Endothelial cell of umbilical vein (primary cell): ENCODE measurements at regions of chr6 and their contacts with region 1.

Region 1: GRCh38 chr6:26532699-26533531 is 5.3 kb upstream of the HMGN4 start:
- DNase-seq: peak; percentile 96
- H3K4me3 ChIP-seq: peak overlapping the region; percentile 65 to 74 (median 65)
- H3K27ac ChIP-seq: peak overlapping the region; percentile 4
- H3K4me1 ChIP-seq: peaks cover 14% of the 10 kb centered on the region
- H3K27me3 ChIP-seq: no peaks in the 10 kb centered on the region
- CTCF ChIP-seq: no peak
- POLR2A ChIP-seq: no peak

Region 2: GRCh38 chr6:26421259-26422144 is 111.4 kb before region 1 on chr6:
- CTCF ChIA-PET with region 1: no interaction called
- POLR2A ChIA-PET with region 1: no interaction called
- dilution Hi-C with region 1: no loop called
- intact Hi-C with region 1: loop called (anchors 5 kb)
- DNase-seq: peak; percentile 95
- H3K4me3 ChIP-seq: peak overlapping the region; percentile 41 to 75 (median 66)
- H3K27ac ChIP-seq: peak overlapping the region; percentile 65
- H3K4me1 ChIP-seq: peaks cover 6% of the 10 kb centered on the region
- H3K27me3 ChIP-seq: no peaks in the 10 kb centered on the region
- CTCF ChIP-seq: no peak
- POLR2A ChIP-seq: no peak

Region 3: GRCh38 chr6:26520853-26521599 is 11.9 kb before region 1 on chr6:
- CTCF ChIA-PET with region 1: interaction called, 13 read pairs
- POLR2A ChIA-PET with region 1: no interaction called
- dilution Hi-C with region 1: no loop called
- intact Hi-C with region 1: loop called (anchors 1 kb)
- DNase-seq: peak; percentile 88
- H3K4me3 ChIP-seq: peak overlapping the region; percentile 46 to 82 (median 79)
- H3K27ac ChIP-seq: peak overlapping the region; percentile 76
- H3K4me1 ChIP-seq: peaks cover 10% of the 10 kb centered on the region
- H3K27me3 ChIP-seq: no peaks in the 10 kb centered on the region
- CTCF ChIP-seq: no peak
- POLR2A ChIP-seq: peak; percentile 68

Region 4: DNA sequence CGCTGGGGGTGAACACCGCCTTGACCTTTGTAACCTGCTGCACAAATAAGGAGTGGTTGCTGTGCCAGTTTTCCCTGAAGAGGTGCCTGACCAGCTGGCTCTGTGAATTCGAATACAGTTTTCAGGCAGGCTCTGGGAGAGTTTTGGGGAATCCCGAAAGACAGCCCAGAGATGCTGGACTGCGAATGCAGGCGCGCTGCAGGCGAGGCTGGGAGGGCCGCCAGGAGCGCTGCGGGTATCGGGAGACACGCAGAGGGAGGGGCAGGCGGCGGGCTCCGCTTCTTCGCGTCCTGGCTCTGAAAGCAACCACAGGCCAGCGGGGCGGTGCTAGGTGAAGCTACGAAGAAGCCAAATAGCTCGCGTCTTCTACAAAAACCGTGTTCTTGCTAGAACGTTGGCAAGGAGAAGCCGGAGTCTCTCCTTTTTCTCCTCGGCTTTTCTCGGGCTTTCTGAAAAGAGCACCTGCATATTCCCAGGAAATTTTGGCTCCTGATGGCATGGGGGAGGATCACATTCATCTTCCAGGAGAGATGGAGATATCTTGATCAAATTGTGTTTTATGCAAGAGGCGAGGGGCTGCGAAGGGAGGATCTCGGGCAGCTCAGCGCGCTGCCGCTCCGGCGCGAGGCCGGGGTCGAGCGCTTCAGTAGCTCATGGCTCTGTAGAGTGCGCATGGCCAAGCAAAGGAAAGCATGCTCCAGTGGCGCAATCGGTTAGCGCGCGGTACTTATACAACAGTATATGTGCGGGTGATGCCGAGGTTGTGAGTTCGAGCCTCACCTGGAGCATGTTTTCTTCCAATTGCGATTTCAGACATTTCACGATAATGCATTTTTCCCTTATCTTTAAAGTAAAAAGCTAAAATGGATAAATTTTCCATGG is 1098.1 kb after region 1 on chr6:
- CTCF ChIA-PET with region 1: no interaction called
- POLR2A ChIA-PET with region 1: no interaction called
- dilution Hi-C with region 1: no loop called
- intact Hi-C with region 1: no loop called
- DNase-seq: peak; percentile 41
- H3K4me3 ChIP-seq: peak overlapping the region; percentile 14 to 71 (median 69)
- H3K27ac ChIP-seq: no peak overlapping the region
- H3K4me1 ChIP-seq: no peaks in the 10 kb centered on the region
- H3K27me3 ChIP-seq: no peaks in the 10 kb centered on the region
- CTCF ChIP-seq: peak; percentile 6 to 26
- POLR2A ChIP-seq: no peak